Head of caudate nucleus (tissue), 42 donors: ENCODE measurements at regions of chr2 and their contacts with region 1.

Region 1: DNA sequence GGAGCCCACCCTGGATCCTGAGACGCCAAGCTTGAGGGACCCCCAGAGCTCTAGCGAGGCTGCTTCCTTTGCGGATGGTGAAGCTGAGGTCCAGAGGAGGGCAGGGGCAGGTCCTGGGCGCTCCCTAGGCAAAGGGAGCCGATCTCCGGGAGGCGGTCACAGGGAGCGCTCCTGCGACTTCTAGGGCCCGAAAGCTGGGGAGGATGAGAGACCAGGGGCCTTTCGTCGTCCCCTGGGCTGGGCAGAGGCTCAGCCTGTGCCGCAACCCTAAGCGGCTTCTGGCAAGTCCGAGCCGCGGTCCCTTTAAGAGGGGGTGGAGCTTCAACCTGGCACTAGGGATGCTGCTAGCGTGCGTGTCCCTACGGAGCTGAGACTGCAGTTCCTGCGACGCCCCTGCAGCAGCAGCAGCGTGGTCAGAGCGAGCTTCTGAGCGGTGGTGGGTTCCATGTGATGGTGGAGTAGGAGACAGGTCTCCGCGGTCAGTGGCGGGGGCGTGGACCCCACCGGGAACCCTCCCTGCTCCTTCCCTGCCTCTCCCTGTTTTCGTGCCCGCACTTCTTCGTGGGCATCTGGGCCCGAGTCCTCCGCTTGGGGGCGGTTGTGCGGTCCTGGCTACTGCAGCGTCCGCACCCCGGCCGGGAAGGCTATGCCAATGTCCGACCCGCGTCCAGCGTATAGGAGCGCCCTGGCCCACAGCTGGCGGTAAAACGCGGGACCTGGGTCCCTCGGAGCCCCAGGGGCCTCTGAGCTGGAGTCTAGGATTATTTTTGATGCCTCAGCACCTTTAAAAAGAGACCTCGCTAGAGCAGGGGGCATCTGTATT is 154.6 kb downstream of the CCDC74A start:
- DNase-seq: peak; percentile 73 to 97 (median 90)

Region 2: GRCh38 chr2:131754929-131755720 is 72.8 kb after region 1 on chr2:
- intact Hi-C with region 1: no loop called
- DNase-seq: no peak

Region 3: GRCh38 chr2:131801210-131801744 is 118.9 kb after region 1 on chr2:
- intact Hi-C with region 1: loop called (anchors 10 kb)
- DNase-seq: peak in 1 of 42 donors; percentile 0